Naive thymus-derived CD4-positive, alpha-beta T cell (primary cell): ENCODE measurements at regions of chr14 and their contacts with region 1.

Region 1: DNA sequence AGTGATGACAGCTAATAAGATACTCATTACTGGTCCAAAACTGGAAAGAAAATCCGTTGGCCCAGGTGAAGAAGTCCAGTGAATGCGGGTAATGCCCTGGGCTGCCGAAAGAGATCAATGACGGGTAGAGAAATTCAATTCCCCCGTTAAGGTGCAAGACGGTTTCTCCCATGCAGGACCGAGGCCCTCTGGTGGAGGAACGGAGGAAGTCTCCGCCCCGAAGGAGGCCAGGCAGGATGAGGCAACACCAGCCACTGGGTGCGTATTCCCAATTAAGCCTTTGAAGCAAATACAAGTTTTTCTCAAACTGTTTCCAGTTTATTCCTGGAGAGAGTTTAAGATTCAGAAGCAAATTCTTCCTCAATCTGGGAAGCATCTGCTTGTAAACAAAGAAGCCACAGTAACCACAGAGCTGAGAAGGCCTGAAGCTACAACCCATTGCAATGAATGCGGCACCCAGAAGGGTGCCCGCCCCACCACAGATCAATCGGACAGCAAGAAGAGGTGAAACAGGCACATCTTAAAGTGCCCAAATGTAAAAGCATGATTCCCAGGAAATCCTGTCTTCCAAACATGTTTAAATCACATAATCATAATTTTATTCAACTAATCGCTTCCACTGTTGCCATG is 118.5 kb downstream of the TTC7B start:
- DNase-seq: peak; percentile 48 to 75 (median 70)
- ATAC-seq: peak; percentile 91
- H3K4me3 ChIP-seq: no peak overlapping the region
- H3K4me3 Mint-ChIP-seq: no peak overlapping the region
- H3K27ac ChIP-seq: no peak overlapping the region
- H3K27ac Mint-ChIP-seq: no peak overlapping the region
- H3K4me1 ChIP-seq: no peaks in the 10 kb centered on the region
- H3K4me1 Mint-ChIP-seq: peaks cover 0 to 5% (median 0%) of the 10 kb centered on the region in 7 donors
- H3K27me3 ChIP-seq: no peaks in the 10 kb centered on the region
- H3K27me3 Mint-ChIP-seq: no peaks in the 10 kb centered on the region

Region 2: DNA sequence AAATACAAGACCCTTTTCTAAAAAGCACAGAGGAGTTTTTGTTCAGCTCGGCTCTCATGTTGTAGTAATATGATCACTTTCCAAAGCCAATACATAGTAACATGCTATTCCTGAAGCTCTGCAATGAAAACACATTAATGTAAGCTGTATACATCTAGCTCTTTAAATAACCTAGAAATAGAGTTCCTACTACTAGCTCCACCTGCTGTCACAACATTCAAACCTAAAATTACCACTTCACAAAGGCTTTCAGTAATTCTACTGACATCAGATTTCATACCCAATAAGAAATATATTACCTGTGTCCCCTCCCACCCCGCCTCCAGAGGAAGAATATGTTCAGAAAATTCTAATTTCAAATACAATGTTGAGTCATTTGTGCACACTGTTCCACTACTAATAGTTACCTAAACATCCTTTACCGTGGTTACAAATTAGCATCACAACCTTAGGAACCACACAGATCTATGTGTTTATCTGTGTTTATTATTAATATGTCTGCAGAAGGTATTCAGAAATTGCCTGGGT is 761.0 kb before region 1 on chr14:
- CTCF ChIA-PET with region 1: no interaction called
- POLR2A ChIA-PET with region 1: no interaction called
- intact Hi-C with region 1: loop called in 1 of 2 experiments (anchors 5 kb)
- DNase-seq: no peak
- ATAC-seq: no peak
- H3K4me3 ChIP-seq: no peak overlapping the region
- H3K4me3 Mint-ChIP-seq: no peak overlapping the region
- H3K27ac ChIP-seq: no peak overlapping the region
- H3K27ac Mint-ChIP-seq: no peak overlapping the region
- H3K4me1 ChIP-seq: no peaks in the 10 kb centered on the region
- H3K4me1 Mint-ChIP-seq: no peaks in the 10 kb centered on the region
- H3K27me3 ChIP-seq: no peaks in the 10 kb centered on the region
- H3K27me3 Mint-ChIP-seq: peaks cover 0 to 5% (median 0%) of the 10 kb centered on the region in 5 donors

Region 3: GRCh38 chr14:89973234-89973823 is 724.4 kb before region 1 on chr14:
- CTCF ChIA-PET with region 1: interaction called, 3 read pairs
- POLR2A ChIA-PET with region 1: no interaction called
- intact Hi-C with region 1: loop called (anchors 1 to 10 kb)
- DNase-seq: peak in 7 of 9 donors; percentile 21 to 44 (median 37)
- ATAC-seq: peak; percentile 76
- H3K4me3 ChIP-seq: no peak overlapping the region
- H3K4me3 Mint-ChIP-seq: no peak overlapping the region
- H3K27ac ChIP-seq: no peak overlapping the region
- H3K27ac Mint-ChIP-seq: no peak overlapping the region
- H3K4me1 ChIP-seq: no peaks in the 10 kb centered on the region
- H3K4me1 Mint-ChIP-seq: peaks cover 0 to 19% (median 3%) of the 10 kb centered on the region in 7 donors
- H3K27me3 ChIP-seq: no peaks in the 10 kb centered on the region
- H3K27me3 Mint-ChIP-seq: no peaks in the 10 kb centered on the region

Region 4: DNA sequence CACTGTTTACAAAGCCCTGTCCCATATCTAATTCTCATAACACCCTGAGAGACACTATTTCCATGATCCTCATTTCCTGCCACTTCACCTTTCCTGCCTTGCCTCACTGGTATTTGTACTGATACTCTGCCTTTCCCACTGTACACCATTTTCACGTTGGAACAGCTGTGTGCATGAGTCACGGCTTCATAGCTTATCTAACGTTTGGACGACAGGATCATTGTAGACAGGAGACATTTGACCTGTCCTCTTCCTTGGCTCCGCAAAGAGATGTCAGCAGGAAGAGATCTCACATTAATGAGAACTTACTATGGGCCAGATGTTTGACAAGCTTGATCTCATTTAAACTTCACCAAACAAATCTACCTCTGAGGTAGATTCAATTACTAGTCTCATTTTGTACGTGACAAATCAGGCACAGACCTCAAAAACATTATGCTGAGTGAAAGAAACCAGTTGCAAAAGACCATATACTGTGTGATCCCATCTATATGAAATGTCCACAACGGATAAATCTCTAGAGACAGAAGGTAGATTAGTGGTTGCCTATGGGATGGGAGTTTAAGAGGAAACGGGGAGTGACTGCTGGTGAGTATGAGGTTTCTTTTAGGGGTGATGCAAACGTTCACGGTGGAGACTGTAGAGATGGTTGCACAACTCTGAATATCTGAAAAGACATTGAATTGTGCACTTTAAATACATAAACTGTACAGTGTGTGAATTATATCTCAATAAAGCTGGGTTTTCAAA is 564.7 kb before region 1 on chr14:
- CTCF ChIA-PET with region 1: no interaction called
- POLR2A ChIA-PET with region 1: no interaction called
- intact Hi-C with region 1: no loop called
- DNase-seq: no peak
- ATAC-seq: no peak
- H3K4me3 ChIP-seq: no peak overlapping the region
- H3K4me3 Mint-ChIP-seq: no peak overlapping the region
- H3K27ac ChIP-seq: no peak overlapping the region
- H3K27ac Mint-ChIP-seq: no peak overlapping the region
- H3K4me1 ChIP-seq: no peaks in the 10 kb centered on the region
- H3K4me1 Mint-ChIP-seq: no peaks in the 10 kb centered on the region
- H3K27me3 ChIP-seq: no peaks in the 10 kb centered on the region
- H3K27me3 Mint-ChIP-seq: peaks cover 0 to 24% (median 20%) of the 10 kb centered on the region in 5 donors

Region 5: GRCh38 chr14:90301668-90302090 is 396.0 kb before region 1 on chr14:
- CTCF ChIA-PET with region 1: interaction called, 16 read pairs
- POLR2A ChIA-PET with region 1: no interaction called
- intact Hi-C with region 1: loop called (anchors 1 kb)
- DNase-seq: peak in 4 of 9 donors; percentile 2 to 28 (median 16)
- ATAC-seq: no peak
- H3K4me3 ChIP-seq: no peak overlapping the region
- H3K4me3 Mint-ChIP-seq: no peak overlapping the region
- H3K27ac ChIP-seq: no peak overlapping the region
- H3K27ac Mint-ChIP-seq: peak overlapping the region in 7 of 9 donors; percentile 26 to 82 (median 56)
- H3K4me1 ChIP-seq: no peaks in the 10 kb centered on the region
- H3K4me1 Mint-ChIP-seq: peaks cover 13 to 31% (median 20%) of the 10 kb centered on the region in 7 donors
- H3K27me3 ChIP-seq: no peaks in the 10 kb centered on the region
- H3K27me3 Mint-ChIP-seq: no peaks in the 10 kb centered on the region

Region 6: GRCh38 chr14:90368946-90369721 is 328.6 kb before region 1 on chr14:
- CTCF ChIA-PET with region 1: interaction called, 36 read pairs
- POLR2A ChIA-PET with region 1: interaction called, 3 read pairs
- intact Hi-C with region 1: loop called (anchors 1 to 2 kb)
- DNase-seq: peak in 7 of 9 donors; percentile 25 to 60 (median 39)
- ATAC-seq: peak; percentile 90
- H3K4me3 ChIP-seq: no peak overlapping the region
- H3K4me3 Mint-ChIP-seq: no peak overlapping the region
- H3K27ac ChIP-seq: no peak overlapping the region
- H3K27ac Mint-ChIP-seq: no peak overlapping the region
- H3K4me1 ChIP-seq: no peaks in the 10 kb centered on the region
- H3K4me1 Mint-ChIP-seq: peaks cover 0 to 8% (median 4%) of the 10 kb centered on the region in 7 donors
- H3K27me3 ChIP-seq: no peaks in the 10 kb centered on the region
- H3K27me3 Mint-ChIP-seq: peaks cover 0 to 25% (median 0%) of the 10 kb centered on the region in 5 donors

Region 7: GRCh38 chr14:90518941-90519256 is 178.8 kb before region 1 on chr14:
- CTCF ChIA-PET with region 1: no interaction called
- POLR2A ChIA-PET with region 1: no interaction called
- intact Hi-C with region 1: loop called in 1 of 2 experiments (anchors 1 kb)
- DNase-seq: peak in 8 of 9 donors; percentile 21 to 59 (median 50)
- ATAC-seq: peak; percentile 65
- H3K4me3 ChIP-seq: no peak overlapping the region
- H3K4me3 Mint-ChIP-seq: no peak overlapping the region
- H3K27ac ChIP-seq: no peak overlapping the region
- H3K27ac Mint-ChIP-seq: no peak overlapping the region
- H3K4me1 ChIP-seq: no peaks in the 10 kb centered on the region
- H3K4me1 Mint-ChIP-seq: no peaks in the 10 kb centered on the region
- H3K27me3 ChIP-seq: no peaks in the 10 kb centered on the region
- H3K27me3 Mint-ChIP-seq: peaks cover 0 to 7% (median 0%) of the 10 kb centered on the region in 5 donors

Region 8: GRCh38 chr14:90677484-90678050 is 20.1 kb before region 1 on chr14:
- CTCF ChIA-PET with region 1: interaction called, 5 read pairs
- POLR2A ChIA-PET with region 1: no interaction called
- intact Hi-C with region 1: loop called in 1 of 2 experiments (anchors 1 kb)
- DNase-seq: peak in 5 of 9 donors; percentile 15 to 33 (median 23)
- ATAC-seq: peak; percentile 44
- H3K4me3 ChIP-seq: no peak overlapping the region
- H3K4me3 Mint-ChIP-seq: peak overlapping the region; percentile 30 to 75 (median 62)
- H3K27ac ChIP-seq: no peak overlapping the region
- H3K27ac Mint-ChIP-seq: peak overlapping the region; percentile 56 to 90 (median 79)
- H3K4me1 ChIP-seq: peaks cover 0 to 23% of the 10 kb centered on the region in 2 donors
- H3K4me1 Mint-ChIP-seq: peaks cover 17 to 37% (median 30%) of the 10 kb centered on the region in 7 donors
- H3K27me3 ChIP-seq: no peaks in the 10 kb centered on the region
- H3K27me3 Mint-ChIP-seq: no peaks in the 10 kb centered on the region